Caco-2 (cell line): ENCODE measurements at regions of chr7 and their contacts with region 1.

Region 1: GRCh38 chr7:55336540-55336939 is 28.6 kb upstream of the LANCL2 start:
- DNase-seq: peak; percentile 41 to 66
- H3K4me3 ChIP-seq: no peak overlapping the region
- H3K4me3 Mint-ChIP-seq: no peak overlapping the region
- H3K27ac Mint-ChIP-seq: peak overlapping the region; percentile 32
- H3K4me1 ChIP-seq: peaks cover 34% of the 10 kb centered on the region
- H3K4me1 Mint-ChIP-seq: peaks cover 30% of the 10 kb centered on the region
- H3K27me3 ChIP-seq: no peaks in the 10 kb centered on the region
- H3K27me3 Mint-ChIP-seq: no peaks in the 10 kb centered on the region
- CTCF ChIP-seq: no peak

Region 2: DNA sequence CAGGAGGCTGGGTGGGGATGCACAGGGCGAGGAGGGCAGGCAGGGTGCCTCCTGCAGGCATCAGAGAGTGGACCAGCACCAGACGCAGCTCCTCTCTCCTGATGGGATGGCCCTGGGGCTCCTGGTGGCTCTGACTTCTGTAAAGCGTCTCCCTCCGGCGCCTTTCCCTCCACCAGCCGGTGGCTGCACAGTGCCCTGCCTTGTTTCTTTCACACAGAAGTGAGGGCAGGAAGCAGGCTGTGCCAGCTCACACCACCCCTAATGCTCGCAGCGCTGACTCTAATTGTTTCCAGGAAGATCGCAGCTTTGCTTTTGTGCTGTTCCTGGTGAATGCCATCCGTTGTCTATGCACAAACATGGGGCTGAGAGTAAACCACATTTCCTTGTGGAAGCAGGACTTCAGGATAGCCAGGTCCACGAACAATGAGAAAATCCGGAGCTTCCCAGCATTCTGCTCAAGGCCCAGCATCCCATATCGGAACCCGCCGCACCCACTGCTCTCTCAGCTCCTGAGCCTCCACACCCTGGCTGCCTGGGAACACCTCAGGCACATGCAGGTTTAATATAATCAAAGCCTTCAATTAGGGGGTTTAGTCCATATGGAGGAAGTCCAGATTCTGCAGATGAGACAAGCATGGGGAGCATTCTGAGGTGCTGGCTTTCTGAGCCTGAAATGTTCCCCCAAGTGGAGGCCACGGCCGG is 123.6 kb before region 1 on chr7:
- CTCF ChIA-PET with region 1: no interaction called
- POLR2A ChIA-PET with region 1: no interaction called
- intact Hi-C with region 1: no loop called
- DNase-seq: no peak
- H3K4me3 ChIP-seq: no peak overlapping the region
- H3K4me3 Mint-ChIP-seq: no peak overlapping the region
- H3K27ac Mint-ChIP-seq: no peak overlapping the region
- H3K4me1 ChIP-seq: peaks cover 11% of the 10 kb centered on the region; the same call in 1 of the 2 replicates
- H3K4me1 Mint-ChIP-seq: peaks cover 10% of the 10 kb centered on the region
- H3K27me3 ChIP-seq: no peaks in the 10 kb centered on the region
- H3K27me3 Mint-ChIP-seq: no peaks in the 10 kb centered on the region
- CTCF ChIP-seq: no peak

Region 3: GRCh38 chr7:55308188-55308929 is 28.2 kb before region 1 on chr7:
- CTCF ChIA-PET with region 1: no interaction called
- POLR2A ChIA-PET with region 1: interaction called, 3 read pairs
- intact Hi-C with region 1: loop called (anchors 1 kb)
- DNase-seq: peak; percentile 78
- H3K4me3 ChIP-seq: no peak overlapping the region
- H3K4me3 Mint-ChIP-seq: no peak overlapping the region
- H3K27ac Mint-ChIP-seq: peak overlapping the region; percentile 92
- H3K4me1 ChIP-seq: peaks cover 23% of the 10 kb centered on the region
- H3K4me1 Mint-ChIP-seq: peaks cover 26% of the 10 kb centered on the region
- H3K27me3 ChIP-seq: no peaks in the 10 kb centered on the region
- H3K27me3 Mint-ChIP-seq: no peaks in the 10 kb centered on the region
- CTCF ChIP-seq: no peak